IMR-90 (cell line): ENCODE measurements at regions of chr7 and their contacts with region 1.

Region 1: DNA sequence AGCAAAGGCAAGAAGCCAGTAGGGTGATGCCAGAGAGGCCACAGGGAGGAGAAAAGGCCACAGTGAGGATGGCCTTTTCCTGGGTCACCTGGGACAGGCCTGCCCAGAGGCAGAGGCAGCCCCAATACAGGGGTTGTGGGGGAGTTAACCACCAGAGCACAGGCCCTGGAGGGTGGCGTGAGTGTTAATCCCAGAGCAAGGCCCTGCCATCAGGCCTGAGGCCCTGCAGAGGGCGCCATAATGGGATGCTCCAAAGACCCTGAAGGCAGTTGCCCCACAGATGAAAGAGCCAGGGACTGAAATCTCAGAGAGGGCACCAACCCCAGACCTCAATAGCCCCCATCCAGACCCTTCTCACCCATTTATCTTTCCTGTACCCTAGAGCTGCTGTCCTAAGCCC is 23.9 kb downstream of the SLC13A4 start:
- DNase-seq: no peak
- ATAC-seq: no peak
- H3K4me3 ChIP-seq: no peak overlapping the region
- H3K27ac ChIP-seq: no peak overlapping the region
- H3K4me1 ChIP-seq: peaks cover 9% of the 10 kb centered on the region
- H3K27me3 ChIP-seq: no peaks in the 10 kb centered on the region
- CTCF ChIP-seq: no peak; the same call in 1 of the 2 replicates
- POLR2A ChIP-seq: no peak
- RAD21 ChIP-seq: no peak

Region 2: DNA sequence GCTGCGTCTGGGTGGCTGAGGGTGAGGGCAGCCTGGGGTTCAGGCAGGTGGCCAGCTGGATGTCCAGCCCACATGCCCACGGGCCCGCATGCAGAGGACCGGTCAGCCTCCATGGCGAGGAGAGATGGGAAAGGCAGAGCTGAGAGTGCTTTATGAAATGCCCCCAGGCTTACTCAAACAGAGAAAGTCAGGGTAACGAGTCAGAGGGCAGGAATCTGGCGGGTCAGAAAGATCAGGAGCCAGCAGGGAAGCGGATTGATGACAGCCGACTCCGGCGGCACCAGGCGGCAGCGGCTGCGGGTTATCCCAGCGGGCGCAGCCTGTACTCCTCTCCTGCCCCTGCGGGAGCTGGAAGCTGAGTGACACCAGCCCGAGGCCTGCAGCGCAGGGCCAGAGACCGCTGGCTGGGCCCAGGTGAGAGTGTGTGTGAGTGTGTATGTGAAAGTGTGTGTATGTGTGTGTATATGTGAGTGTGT is 10.5 kb after region 1 on chr7:
- CTCF ChIA-PET with region 1: interaction called, 3 read pairs
- POLR2A ChIA-PET with region 1: no interaction called
- dilution Hi-C with region 1: no loop called
- in situ Hi-C with region 1: no loop called
- intact Hi-C with region 1: loop called (anchors 1 kb)
- DNase-seq: peak; percentile 74
- ATAC-seq: peak; percentile 68
- H3K4me3 ChIP-seq: no peak overlapping the region
- H3K27ac ChIP-seq: peak overlapping the region; percentile 41; the same call in 1 of the 2 replicates
- H3K4me1 ChIP-seq: peaks cover 16% of the 10 kb centered on the region
- H3K27me3 ChIP-seq: no peaks in the 10 kb centered on the region
- CTCF ChIP-seq: no peak
- POLR2A ChIP-seq: no peak
- RAD21 ChIP-seq: no peak; the same call in 1 of the 2 replicates

Region 3: GRCh38 chr7:136470179-136470578 is 766.1 kb after region 1 on chr7:
- CTCF ChIA-PET with region 1: no interaction called
- POLR2A ChIA-PET with region 1: no interaction called
- dilution Hi-C with region 1: no loop called
- in situ Hi-C with region 1: no loop called
- intact Hi-C with region 1: no loop called
- DNase-seq: no peak
- ATAC-seq: no peak
- H3K4me3 ChIP-seq: no peak overlapping the region
- H3K27ac ChIP-seq: no peak overlapping the region
- H3K4me1 ChIP-seq: no peaks in the 10 kb centered on the region
- H3K27me3 ChIP-seq: no peaks in the 10 kb centered on the region
- CTCF ChIP-seq: no peak
- POLR2A ChIP-seq: no peak
- RAD21 ChIP-seq: no peak